ENCODE measurements at regions of chr11 and their contacts with region 1.

Region 1: DNA sequence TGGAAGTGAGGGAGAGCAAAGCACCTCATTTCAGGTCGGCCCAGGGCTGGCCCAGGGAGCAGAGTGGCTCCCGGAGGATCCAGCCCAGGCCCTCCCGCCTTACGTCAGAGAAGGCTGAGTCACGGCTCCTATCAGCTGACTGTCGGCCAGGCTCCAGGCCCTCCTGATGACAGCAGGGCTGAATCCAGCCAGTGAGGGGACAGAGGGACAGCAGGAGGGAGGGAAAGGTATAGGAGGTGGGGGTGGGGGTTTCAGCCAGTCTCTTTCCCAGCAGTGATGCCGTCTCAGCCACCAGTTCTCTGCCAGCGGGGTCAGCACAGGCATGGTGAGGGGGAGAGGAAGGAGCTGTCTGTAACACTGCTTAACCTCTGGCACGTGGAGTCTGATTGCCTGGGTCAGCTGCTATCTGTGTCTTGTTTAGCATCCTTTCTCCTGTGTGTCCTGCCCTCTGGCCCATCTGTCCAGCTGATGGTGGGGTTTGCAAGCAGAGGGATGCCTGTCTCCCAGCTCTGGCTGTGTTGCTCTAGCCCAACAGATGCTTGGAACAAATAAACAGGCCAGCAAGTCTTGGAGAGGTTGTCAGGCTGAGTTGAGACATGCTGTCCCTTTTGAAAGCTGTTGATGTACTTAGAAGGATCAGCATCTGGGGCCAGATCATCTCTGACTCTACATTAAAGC is 74.0 kb downstream of the ADAMTS15 start:
- DNase-seq: peak; percentile 91 to 96
- ATAC-seq: peak; percentile 98 to 99 (median 98)
- H3K4me3 ChIP-seq: no peak overlapping the region
- H3K27ac ChIP-seq: peak overlapping the region; percentile 84
- H3K4me1 ChIP-seq: peaks cover 23% of the 10 kb centered on the region
- H3K27me3 ChIP-seq: no peaks in the 10 kb centered on the region
- CTCF ChIP-seq: no peak

Region 2: DNA sequence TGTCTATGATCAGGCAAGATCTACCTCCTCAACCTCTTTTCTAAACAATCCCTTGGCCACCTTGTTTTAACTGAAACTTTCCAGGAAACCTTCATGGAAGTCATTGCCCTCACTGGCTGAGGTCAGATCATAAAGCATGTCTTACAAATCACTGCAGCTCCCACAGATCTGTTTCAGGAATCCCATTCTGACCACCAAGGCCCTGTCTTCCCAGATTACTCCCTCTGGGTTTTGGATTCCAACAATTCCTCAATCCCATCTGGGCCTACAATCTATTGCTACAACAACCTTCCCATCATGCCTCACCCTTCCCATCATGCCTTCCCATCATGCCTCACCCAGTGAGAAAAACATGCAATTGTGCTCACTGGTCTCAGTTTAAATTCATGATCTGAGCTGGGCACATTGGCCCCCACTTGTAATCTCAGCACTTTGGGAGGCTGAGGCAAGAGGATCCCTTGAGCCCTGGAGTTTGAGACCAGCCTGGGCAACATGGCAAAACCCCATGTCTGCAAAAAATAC is 58.1 kb before region 1 on chr11:
- intact Hi-C with region 1: loop called in 1 of 2 experiments (anchors 5 kb)
- DNase-seq: no peak
- ATAC-seq: no peak
- H3K4me3 ChIP-seq: no peak overlapping the region
- H3K27ac ChIP-seq: no peak overlapping the region
- H3K4me1 ChIP-seq: no peaks in the 10 kb centered on the region
- H3K27me3 ChIP-seq: no peaks in the 10 kb centered on the region
- CTCF ChIP-seq: no peak

Region 3: GRCh38 chr11:130744794-130745193 is 222.4 kb after region 1 on chr11:
- intact Hi-C with region 1: no loop called
- DNase-seq: no peak
- ATAC-seq: no peak
- H3K4me3 ChIP-seq: no peak overlapping the region
- H3K27ac ChIP-seq: no peak overlapping the region
- H3K4me1 ChIP-seq: no peaks in the 10 kb centered on the region
- H3K27me3 ChIP-seq: no peaks in the 10 kb centered on the region
- CTCF ChIP-seq: no peak

Measured in psoas muscle (tissue), 8 donors.